Common myeloid progenitor, CD34-positive (primary cell): ENCODE measurements at regions of chrX and their contacts with region 1.

Region 1: DNA sequence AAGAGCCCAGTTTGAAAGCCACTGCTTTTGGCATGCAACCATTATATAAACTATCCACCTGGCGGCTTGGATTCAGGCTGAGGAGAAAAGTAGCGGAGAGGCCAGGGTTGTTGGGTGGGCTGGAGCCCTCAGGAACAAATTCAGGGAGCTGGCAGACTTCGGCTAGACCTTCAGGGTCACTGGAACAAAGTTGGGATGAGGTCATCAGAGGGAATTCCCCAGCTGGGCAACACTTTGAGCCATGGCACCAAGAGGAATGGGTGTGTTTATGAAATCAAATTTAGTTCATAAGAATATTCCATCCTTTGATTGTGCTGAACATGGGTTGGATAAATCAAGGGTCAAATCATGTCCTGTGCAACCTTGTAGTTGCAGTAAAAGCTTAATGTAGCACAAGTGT is 22.0 kb downstream of the MTMR1 start:
- DNase-seq: no peak
- H3K4me3 ChIP-seq: no peak overlapping the region
- H3K27ac ChIP-seq: no peak overlapping the region
- H3K4me1 ChIP-seq: peaks cover 0 to 4% (median under 1%) of the 10 kb centered on the region in 4 experiments
- H3K27me3 ChIP-seq: no peaks in the 10 kb centered on the region

Region 2: DNA sequence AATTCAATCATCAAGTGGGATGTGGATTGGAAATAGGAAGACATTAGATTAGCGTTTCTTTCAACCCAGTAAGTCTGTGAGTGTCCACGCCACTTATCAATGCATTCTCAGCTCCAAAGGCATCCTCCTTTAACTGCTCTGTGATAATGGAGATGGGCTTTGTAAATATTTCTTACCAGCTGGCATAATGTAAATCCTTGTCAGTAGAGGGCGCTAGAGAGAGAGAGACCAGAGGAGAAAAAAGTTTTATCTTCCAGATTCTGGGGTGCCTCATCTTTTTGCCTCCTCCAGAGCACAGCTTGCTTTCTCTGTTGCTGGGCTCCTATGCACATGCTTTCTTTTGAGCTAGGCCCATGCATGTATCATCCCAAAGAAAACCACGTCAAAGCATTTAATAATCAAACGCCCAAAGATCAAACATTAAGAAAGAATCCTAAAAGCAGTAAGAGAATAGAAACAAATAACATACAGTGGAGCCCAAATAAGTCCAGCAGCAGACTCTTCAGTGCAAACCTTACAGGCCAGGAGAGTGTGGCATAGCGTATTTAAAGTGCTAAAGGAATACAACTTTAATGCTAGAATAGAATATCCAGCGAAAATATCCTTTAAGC is 31.5 kb before region 1 on chrX:
- CTCF ChIA-PET with region 1: interaction called, 59 read pairs
- POLR2A ChIA-PET with region 1: no interaction called
- DNase-seq: peak; percentile 42 to 72 (median 63)
- H3K4me3 ChIP-seq: no peak overlapping the region
- H3K27ac ChIP-seq: no peak overlapping the region
- H3K4me1 ChIP-seq: no peaks in the 10 kb centered on the region
- H3K27me3 ChIP-seq: no peaks in the 10 kb centered on the region

Region 3: DNA sequence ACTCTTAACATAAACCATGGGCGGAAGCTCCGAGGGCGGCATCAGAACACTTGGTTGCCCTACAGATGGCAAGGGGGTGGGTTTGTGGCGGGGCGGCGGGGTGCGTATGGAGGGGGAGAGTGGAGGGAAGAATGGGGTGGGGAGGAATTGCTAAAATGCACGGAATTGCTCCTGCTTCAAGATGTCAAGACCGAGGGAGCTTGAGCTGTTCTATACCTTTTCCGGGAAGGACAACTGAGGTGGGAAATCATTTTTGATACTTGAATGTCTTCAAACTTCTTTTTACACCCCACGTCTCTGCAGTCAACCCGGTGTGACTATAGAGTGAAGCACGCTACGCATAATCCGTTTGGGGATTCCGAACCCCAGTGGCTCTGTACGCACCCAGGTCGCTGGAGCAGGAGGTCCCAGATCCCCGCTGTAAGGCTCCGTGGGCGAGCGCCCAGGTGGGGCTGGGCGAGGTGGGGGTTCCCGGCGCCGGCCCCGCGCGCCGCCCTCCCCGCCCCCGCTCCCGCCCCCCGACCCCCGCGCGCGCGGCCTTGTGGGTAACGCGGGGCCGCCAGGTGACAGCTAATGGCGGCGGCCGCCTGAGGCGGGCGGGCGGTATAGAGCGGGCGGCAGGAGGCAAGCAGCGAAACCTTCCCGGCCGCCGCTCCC is 22.2 kb before region 1 on chrX and contains the start of gene MTMR1:
- CTCF ChIA-PET with region 1: interaction called, 59 read pairs
- POLR2A ChIA-PET with region 1: no interaction called
- DNase-seq: peak in 2 of 3 donors; percentile 58 to 70
- H3K4me3 ChIP-seq: peak within 1 kb of the TSS; percentile 26 to 83 (median 69)
- H3K27ac ChIP-seq: peak within 1 kb of the TSS in 1 of 2 experiments; percentile 61
- H3K4me1 ChIP-seq: peaks cover 20 to 52% (median 37%) of the 10 kb centered on the region in 4 experiments
- H3K27me3 ChIP-seq: no peaks in the 10 kb centered on the region

Region 4: DNA sequence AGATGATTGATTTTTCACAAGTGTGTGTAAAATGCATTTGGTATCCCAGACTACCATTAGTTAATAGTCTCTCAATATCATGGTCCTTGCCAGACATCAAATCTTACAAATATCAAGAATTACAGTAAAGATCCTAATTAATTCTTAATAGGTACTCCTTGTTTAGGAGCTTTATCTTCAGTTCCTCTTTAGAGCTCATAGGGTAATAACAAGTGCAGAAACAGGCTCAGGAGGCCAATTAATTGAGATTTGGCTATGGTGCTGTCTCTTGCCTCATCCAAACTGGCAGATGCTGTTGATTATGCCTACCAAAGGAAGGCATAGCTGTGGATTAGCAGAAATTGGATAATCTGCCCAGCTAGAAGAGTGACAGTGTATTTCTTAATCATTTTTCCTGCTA is 15.1 kb before region 1 on chrX:
- CTCF ChIA-PET with region 1: interaction called, 12 read pairs
- POLR2A ChIA-PET with region 1: no interaction called
- DNase-seq: no peak
- H3K4me3 ChIP-seq: no peak overlapping the region
- H3K27ac ChIP-seq: no peak overlapping the region
- H3K4me1 ChIP-seq: peaks cover 19 to 28% (median 22%) of the 10 kb centered on the region in 4 experiments
- H3K27me3 ChIP-seq: no peaks in the 10 kb centered on the region